Heart left ventricle (tissue), 16 donors: ENCODE measurements at regions of chr5 and their contacts with region 1.

Region 1: GRCh38 chr5:153981905-153982605 is 56.7 kb downstream of the FAM114A2 start:
- DNase-seq: no peak
- ATAC-seq: no peak
- H3K4me3 ChIP-seq: no peak overlapping the region
- H3K27ac ChIP-seq: no peak overlapping the region
- H3K4me1 ChIP-seq: no peaks in the 10 kb centered on the region
- H3K27me3 ChIP-seq: no peaks in the 10 kb centered on the region
- CTCF ChIP-seq: no peak
- POLR2A ChIP-seq: no peak

Region 2: GRCh38 chr5:154060606-154061005 is 78.6 kb after region 1 on chr5:
- intact Hi-C with region 1: loop called in 2 of 10 experiments (anchors 5 to 10 kb)
- DNase-seq: no peak
- ATAC-seq: no peak
- H3K4me3 ChIP-seq: no peak overlapping the region
- H3K27ac ChIP-seq: no peak overlapping the region
- H3K4me1 ChIP-seq: peaks cover 0 to 20% (median 13%) of the 10 kb centered on the region in 12 donors
- H3K27me3 ChIP-seq: no peaks in the 10 kb centered on the region
- CTCF ChIP-seq: no peak
- POLR2A ChIP-seq: no peak

Region 3: DNA sequence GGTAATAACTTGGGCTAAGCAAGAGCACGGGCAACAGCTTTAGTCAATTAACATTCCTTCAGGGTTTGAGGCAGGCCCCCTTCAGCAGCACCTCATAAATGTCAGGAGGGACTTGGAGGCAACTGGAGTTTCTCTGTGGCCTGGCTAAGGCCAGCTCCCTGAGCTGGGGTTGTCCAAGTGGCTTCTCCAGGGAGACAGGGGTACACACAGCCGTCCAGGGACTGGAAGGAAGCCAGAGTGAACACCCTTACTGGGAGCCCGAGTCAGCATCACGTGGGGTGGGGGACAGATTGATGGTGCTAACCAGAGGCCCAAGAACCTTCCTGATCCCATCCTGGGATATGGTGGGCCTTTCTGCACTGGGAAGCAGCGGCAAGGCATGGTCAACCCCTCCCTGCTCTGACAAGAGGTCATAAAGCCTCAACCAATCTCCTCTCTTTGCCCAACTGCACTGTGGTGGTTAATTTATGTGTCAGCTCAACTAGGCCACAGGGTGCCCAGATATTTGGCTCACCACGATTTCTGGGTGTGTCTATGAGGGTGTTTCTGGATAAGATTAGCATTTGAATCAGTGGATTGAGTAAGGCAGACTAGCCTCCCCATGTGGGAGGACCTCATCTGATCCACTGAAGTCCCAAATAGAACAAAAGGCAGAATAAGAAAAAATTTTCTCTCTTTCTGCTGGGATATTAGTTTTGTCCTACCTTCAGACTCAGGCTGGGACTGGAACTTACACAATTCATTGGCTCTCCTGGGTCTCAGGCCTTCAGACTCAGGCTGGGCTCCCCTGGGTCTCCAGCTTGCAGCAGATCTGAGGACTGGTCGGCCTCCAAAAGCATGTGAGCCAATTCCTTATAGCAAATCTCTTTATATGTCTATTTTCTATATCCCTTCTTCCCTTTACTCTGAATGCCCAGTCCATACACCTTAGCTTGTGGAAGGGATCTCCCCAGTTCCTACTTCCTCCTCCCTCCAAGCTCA is 645.9 kb after region 1 on chr5:
- intact Hi-C with region 1: loop called in 1 of 10 experiments (anchors 10 kb)
- DNase-seq: no peak
- ATAC-seq: no peak
- H3K4me3 ChIP-seq: no peak overlapping the region
- H3K27ac ChIP-seq: no peak overlapping the region
- H3K4me1 ChIP-seq: no peaks in the 10 kb centered on the region
- H3K27me3 ChIP-seq: peaks cover 0 to 1% (median 0%) of the 10 kb centered on the region in 9 donors
- CTCF ChIP-seq: no peak
- POLR2A ChIP-seq: no peak